A549 (cell line): ENCODE measurements at regions of chr10 and their contacts with region 1.

Region 1: GRCh38 chr10:92810934-92811532 is 37.3 kb upstream of the EXOC6 start:
- DNase-seq: no peak
- ATAC-seq: no peak
- H3K4me3 ChIP-seq: no peak overlapping the region
- H3K27ac ChIP-seq: no peak overlapping the region
- H3K4me1 ChIP-seq: 0 out of 3 replicates have a peak, but pooled peaks cover 1% of the 10 kb centered on the region
- CTCF ChIP-seq: no peak
- EP300 ChIP-seq: no peak
- POLR2A ChIP-seq: no peak
- RAD21 ChIP-seq: no peak

Region 2: DNA sequence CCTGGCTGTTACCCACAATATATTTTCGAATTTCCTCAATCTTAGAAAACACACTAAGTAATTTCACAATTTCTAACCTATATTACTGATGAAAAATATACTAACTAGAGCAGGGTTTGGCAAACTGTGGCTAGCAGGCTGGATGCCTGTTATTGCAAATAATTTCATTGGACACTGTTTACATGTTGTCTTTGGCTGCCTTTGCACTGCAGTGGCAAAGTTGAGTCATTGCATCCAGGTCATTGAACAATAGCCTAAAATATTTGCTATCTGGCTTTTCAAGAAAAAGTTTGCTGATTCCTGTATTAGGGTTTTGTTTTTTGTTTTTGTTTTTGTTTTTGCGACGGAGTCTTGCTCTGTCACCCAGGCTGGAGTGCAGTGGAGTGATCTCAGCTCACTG is 170.9 kb before region 1 on chr10:
- CTCF ChIA-PET with region 1: no interaction called
- POLR2A ChIA-PET with region 1: no interaction called
- DNase-seq: peak; percentile 7 to 41
- ATAC-seq: peak; percentile 53 to 71; a peak in 4 of 6 replicates
- H3K4me3 ChIP-seq: no peak overlapping the region
- H3K27ac ChIP-seq: peak overlapping the region in 1 of 2 experiments; percentile 52; a peak in 1 of 6 replicates
- H3K4me1 ChIP-seq: peaks cover 25% of the 10 kb centered on the region
- CTCF ChIP-seq: no peak
- EP300 ChIP-seq: no peak
- POLR2A ChIP-seq: no peak
- RAD21 ChIP-seq: no peak

Region 3: GRCh38 chr10:92822060-92822634 is 11.1 kb after region 1 on chr10:
- CTCF ChIA-PET with region 1: interaction called, 13 read pairs
- POLR2A ChIA-PET with region 1: no interaction called
- DNase-seq: peak; percentile 69 to 82
- ATAC-seq: peak; percentile 93 to 97
- H3K4me3 ChIP-seq: no peak overlapping the region
- H3K27ac ChIP-seq: peak overlapping the region; percentile 88 to 94
- H3K4me1 ChIP-seq: peaks cover 35% of the 10 kb centered on the region
- CTCF ChIP-seq: no peak
- EP300 ChIP-seq: peak; percentile 36 to 38; a peak in 1 of 5 replicates
- POLR2A ChIP-seq: no peak
- RAD21 ChIP-seq: peak in 1 of 2 experiments; percentile 25; a peak in 2 of 5 replicates

Region 4: GRCh38 chr10:92873029-92873428 is 62.0 kb after region 1 on chr10:
- CTCF ChIA-PET with region 1: no interaction called
- POLR2A ChIA-PET with region 1: no interaction called
- DNase-seq: no peak
- ATAC-seq: no peak
- H3K4me3 ChIP-seq: no peak overlapping the region
- H3K27ac ChIP-seq: no peak overlapping the region
- H3K4me1 ChIP-seq: peaks cover 32% of the 10 kb centered on the region
- CTCF ChIP-seq: no peak
- EP300 ChIP-seq: no peak
- POLR2A ChIP-seq: no peak
- RAD21 ChIP-seq: no peak